ENCODE measurements at regions of chr22 and their contacts with region 1.

Region 1: DNA sequence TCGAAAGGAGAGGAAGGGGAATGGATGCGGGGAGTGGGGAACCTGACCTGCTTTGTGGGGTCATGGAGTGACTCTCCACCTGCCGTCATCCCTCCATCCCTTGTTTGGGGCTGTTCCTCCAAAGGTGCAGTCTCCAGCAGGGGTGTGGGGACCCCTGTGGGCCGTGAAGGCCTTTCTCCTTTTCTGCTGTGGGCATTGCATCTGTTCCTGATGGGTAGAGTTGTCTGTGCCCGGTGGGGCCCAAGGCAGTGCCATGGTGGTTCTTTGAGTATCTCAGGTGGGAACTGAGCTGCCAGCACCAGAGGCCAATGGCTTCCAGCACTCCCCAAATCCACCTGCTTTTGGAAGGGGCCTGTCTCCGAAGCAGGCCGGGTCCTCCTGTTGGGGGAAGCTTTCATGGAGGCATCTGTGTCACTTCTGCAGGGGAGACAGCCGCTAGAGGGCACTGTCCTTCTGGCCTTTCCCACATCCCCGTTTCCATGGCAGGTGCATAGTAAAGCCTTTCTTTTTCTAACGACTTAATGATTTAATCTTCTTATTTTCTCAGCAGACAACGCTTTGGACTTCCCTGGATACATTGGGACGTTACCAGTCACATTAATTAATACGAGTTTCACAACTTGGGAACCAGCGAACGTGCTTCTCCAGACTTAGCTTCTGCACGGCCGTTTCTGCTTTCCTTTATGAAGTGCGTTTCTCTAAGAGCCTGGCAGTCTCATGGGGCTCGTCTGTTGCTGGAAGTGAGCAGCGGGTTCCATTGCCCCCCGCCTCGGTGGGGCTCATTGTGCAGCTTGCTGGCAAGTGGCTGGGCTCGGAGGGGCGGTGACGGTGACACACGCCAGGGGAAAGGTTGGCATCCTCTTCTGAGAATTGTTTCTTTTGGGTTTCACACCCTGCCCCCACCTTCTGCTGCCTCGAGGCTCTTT is 57.1 kb downstream of the PARVB start:
- DNase-seq: peak; percentile 49
- H3K4me3 Mint-ChIP-seq: no peak overlapping the region
- H3K27ac Mint-ChIP-seq: no peak overlapping the region
- H3K4me1 Mint-ChIP-seq: no peaks in the 10 kb centered on the region
- H3K27me3 Mint-ChIP-seq: no peaks in the 10 kb centered on the region

Region 2: GRCh38 chr22:43993027-43993760 is 88.0 kb before region 1 on chr22:
- intact Hi-C with region 1: loop called (anchors 1 kb)
- DNase-seq: peak; percentile 43
- H3K4me3 Mint-ChIP-seq: no peak overlapping the region
- H3K27ac Mint-ChIP-seq: peak overlapping the region; percentile 61
- H3K4me1 Mint-ChIP-seq: peaks cover 27% of the 10 kb centered on the region
- H3K27me3 Mint-ChIP-seq: no peaks in the 10 kb centered on the region

Region 3: DNA sequence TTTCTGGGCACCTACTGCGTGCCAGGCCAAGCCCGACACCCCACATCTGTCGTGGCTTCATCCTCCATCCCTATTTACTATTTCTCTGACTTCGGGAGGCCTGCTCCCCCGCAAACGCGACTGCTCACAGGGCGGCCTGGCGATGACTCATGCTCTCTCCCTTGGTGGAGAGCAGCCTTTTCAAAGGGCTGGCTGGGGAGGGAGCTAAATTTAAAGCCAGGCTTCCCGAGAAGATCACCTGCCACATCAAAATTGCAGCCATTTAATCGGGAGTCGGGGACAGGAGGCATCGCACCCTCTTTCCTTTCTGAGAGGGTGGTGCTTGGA is 256.4 kb after region 1 on chr22:
- intact Hi-C with region 1: no loop called
- DNase-seq: no peak
- H3K4me3 Mint-ChIP-seq: no peak overlapping the region
- H3K27ac Mint-ChIP-seq: no peak overlapping the region
- H3K4me1 Mint-ChIP-seq: no peaks in the 10 kb centered on the region
- H3K27me3 Mint-ChIP-seq: peaks cover 4% of the 10 kb centered on the region

Region 4: GRCh38 chr22:44567846-44568493 is 486.8 kb after region 1 on chr22:
- intact Hi-C with region 1: loop called (anchors 2 kb)
- DNase-seq: peak; percentile 33
- H3K4me3 Mint-ChIP-seq: no peak overlapping the region
- H3K27ac Mint-ChIP-seq: no peak overlapping the region
- H3K4me1 Mint-ChIP-seq: no peaks in the 10 kb centered on the region
- H3K27me3 Mint-ChIP-seq: peaks cover 7% of the 10 kb centered on the region

Region 5: DNA sequence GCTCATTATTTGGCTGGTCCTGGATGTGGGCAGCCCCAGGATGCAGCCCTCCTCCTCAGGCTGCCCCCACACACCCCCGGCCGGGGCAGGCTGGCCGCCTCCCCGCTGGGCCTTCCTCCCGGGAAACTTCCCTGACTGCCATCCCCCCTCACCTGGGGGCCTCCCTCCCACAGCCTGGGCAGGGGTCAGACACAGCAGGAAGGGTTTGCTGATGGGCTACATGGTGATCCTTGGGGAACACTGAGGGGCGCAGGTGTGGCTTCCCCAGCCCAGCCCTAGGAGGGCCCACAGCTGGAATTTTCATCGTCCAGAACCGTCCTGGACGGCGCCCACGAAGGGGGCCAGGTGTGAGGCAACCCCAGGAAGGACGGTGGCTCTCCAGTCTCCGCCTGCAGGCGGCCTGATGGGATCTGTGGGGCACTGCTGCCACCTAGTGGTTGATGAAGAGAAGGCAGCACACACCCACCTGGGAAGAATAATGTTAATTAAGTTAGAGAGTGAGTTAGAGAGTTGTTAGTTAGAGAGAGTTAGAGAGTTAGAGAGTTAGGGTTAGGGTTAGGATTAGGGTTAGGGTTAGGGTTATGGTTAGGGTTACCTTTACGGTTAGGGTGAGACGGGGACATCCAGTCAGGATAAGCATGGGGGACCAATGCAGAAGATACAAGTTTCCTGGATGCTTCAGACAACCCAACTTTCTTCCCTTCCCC is 544.9 kb after region 1 on chr22:
- intact Hi-C with region 1: loop called (anchors 1 kb)
- DNase-seq: peak; percentile 70
- H3K4me3 Mint-ChIP-seq: no peak overlapping the region
- H3K27ac Mint-ChIP-seq: no peak overlapping the region
- H3K4me1 Mint-ChIP-seq: no peaks in the 10 kb centered on the region
- H3K27me3 Mint-ChIP-seq: peaks cover 7% of the 10 kb centered on the region

Measured in activated T-helper 1 cell treated with anti-CD3 and anti-CD28 coated beads, Interleukin-12 subunit alpha, Interleukin-12 subunit beta, Interleukin-2, Interleukin-4 antibody, amounts not matched to agents 30 ng/mL and 10 ng/mL and 1 ng/mL, durations not matched to agents 14 hours and 24 hours and 36 hours (primary cell).